ENCODE measurements at regions of chr10 and their contacts with region 1.

Region 1: DNA sequence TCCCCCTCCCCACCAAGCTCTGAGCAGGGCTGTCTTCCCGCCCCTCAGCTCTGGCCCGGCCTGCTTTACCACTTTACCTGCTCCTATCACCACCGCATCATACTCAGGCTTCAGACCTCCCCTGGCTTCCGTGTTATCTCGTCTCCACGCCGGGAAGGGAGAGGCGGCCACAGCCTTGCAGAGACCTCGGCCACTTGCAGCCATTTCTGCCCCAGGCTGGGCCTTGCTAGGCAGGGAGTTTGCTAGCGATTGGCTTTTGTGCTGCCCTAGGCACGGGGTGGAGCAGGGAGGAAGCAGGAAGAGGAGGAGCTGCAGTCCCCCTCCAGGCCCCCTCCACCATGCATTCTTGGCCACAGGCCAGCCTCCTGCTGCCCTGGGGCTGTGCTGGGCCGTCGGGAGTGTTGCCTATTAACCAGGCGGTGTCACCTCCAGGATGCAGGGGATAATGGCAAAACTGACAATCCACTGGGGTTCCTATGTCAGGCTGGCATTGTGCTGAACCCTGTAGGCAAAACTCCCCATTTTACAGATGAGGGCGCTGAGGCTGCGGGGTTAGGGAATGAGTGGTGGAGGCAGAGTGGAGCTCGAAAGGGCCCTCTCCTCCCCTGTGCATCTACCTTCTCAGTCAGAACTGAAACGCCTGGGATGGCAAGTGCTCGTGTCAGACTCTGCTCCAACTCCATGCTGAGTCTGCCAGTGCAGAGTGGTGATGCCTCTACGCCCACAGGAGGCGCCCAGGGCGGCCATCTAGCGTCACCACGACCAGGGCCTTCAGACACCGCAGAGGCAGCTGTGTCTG is at the start of gene PYROXD2:
- DNase-seq: peak; percentile 68
- ATAC-seq: peak; percentile 96
- H3K4me3 Mint-ChIP-seq: peak within 1 kb of the TSS; percentile 99
- H3K27ac Mint-ChIP-seq: peak within 1 kb of the TSS; percentile 99
- H3K4me1 Mint-ChIP-seq: peaks cover 8% of the 10 kb centered on the region
- H3K27me3 Mint-ChIP-seq: no peaks in the 10 kb centered on the region
- total RNA-seq, gene PYROXD2: 14.0 to 18.0 TPM

Region 2: GRCh38 chr10:98425511-98426352 is 10.6 kb after region 1 on chr10:
- POLR2A ChIA-PET with region 1: interaction called, 11 read pairs
- DNase-seq: no peak
- ATAC-seq: peak; percentile 48
- H3K4me3 Mint-ChIP-seq: no peak overlapping the region
- H3K27ac Mint-ChIP-seq: no peak overlapping the region
- H3K4me1 Mint-ChIP-seq: no peaks in the 10 kb centered on the region
- H3K27me3 Mint-ChIP-seq: no peaks in the 10 kb centered on the region

Measured in activated naive CD8-positive, alpha-beta T cell treated with anti-CD3 and anti-CD28 coated beads, Interleukin-2, amount 10 ng/mL, durations not matched to agents 7 days and 5 days (primary cell).